ENCODE measurements at regions of chr20 and their contacts with region 1.

Region 1: DNA sequence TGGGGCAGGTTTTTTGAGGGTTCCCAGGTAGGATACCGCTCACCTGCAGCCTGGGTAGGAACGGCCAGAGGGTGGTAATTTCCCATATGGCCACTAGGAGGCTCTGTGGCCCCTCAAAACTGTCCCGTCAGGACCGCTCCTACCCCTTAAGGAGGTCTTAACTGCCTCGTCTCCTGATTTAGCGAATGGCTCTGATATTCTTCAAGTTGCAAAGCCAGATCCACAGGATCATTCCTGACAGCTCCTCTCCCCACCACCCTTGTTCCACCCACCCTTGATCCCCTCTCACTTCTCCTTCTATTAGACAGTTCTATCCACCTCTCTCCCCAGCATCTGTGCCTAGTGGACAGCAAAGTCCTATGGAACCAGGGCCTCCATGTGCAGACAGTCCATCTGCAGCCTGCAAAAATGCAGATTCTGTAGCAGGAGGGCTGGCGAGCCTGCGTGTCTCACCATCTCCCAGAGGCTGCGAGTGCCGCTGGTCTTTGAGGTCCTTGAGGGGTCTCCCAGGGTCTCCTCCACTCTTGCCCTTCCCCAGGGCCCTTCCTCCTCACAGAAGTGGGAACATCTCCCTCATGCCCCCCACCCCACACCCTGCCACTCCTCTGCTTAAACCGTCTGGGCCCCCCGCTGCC is 34.3 kb upstream of the ZBP1 start:
- DNase-seq: peak; percentile 76
- H3K4me3 ChIP-seq: no peak overlapping the region
- H3K27ac ChIP-seq: no peak overlapping the region
- H3K4me1 ChIP-seq: peaks cover 0 to 7% (median 2%) of the 10 kb centered on the region in 4 donors
- H3K27me3 ChIP-seq: no peaks in the 10 kb centered on the region
- CTCF ChIP-seq: peak; percentile 79 to 96 (median 92)
- EP300 ChIP-seq: no peak
- POLR2A ChIP-seq: no peak

Region 2: DNA sequence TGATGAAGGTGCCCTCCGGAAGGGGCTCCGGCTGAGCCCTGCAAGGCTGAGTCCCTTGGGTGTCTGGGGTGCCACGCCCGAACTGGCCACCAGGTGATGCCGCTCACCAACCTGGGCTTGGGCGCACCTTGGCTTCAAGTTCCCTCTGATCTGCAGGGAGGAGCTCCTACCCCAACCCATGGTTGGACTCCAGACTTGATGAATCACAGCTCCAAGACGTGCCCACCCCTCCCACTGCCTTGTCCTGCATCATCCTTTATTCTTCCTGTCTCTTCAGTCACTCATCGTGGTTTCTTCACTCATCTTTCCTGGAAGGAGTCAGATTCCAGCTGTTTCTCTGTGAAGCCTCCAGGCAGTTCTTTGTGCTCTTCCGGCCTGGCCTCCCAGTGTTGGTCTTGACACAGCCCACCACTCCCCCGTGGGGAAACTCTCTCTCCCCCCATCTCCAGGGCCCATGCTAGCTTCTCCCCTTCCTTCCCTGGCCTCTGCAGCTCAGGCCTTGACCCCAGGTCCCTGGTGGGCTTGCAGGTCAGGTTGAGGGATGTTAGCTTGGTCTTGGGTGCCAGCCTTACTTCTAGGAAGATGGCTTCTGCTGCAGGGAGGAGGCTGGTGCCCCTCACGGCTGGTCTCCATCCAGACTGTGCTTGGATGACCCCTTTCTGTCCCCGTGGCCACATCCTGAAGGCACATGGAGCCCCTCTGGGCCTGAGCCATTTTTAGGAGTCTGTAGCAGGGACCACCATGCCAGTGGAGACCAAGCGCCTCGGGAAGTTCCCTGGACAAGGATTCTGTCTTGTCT is 31.7 kb before region 1 on chr20:
- intact Hi-C with region 1: no loop called
- DNase-seq: no peak
- H3K4me3 ChIP-seq: no peak overlapping the region
- H3K27ac ChIP-seq: no peak overlapping the region
- H3K4me1 ChIP-seq: peaks cover 0 to 9% (median 6%) of the 10 kb centered on the region in 4 donors
- H3K27me3 ChIP-seq: peaks cover 0 to 20% (median 4%) of the 10 kb centered on the region in 3 donors
- CTCF ChIP-seq: peak in 3 of 4 experiments; percentile 42 to 54 (median 45)
- EP300 ChIP-seq: no peak
- POLR2A ChIP-seq: no peak

Region 3: GRCh38 chr20:58087193-58087858 is 432.8 kb after region 1 on chr20:
- intact Hi-C with region 1: loop called (anchors 5 kb)
- DNase-seq: peak; percentile 43
- H3K4me3 ChIP-seq: no peak overlapping the region
- H3K27ac ChIP-seq: no peak overlapping the region
- H3K4me1 ChIP-seq: peaks cover 0 to 1% (median 0%) of the 10 kb centered on the region in 4 donors
- H3K27me3 ChIP-seq: no peaks in the 10 kb centered on the region
- CTCF ChIP-seq: peak in 3 of 4 experiments; percentile 57 to 85 (median 65)
- EP300 ChIP-seq: no peak
- POLR2A ChIP-seq: no peak

Region 4: GRCh38 chr20:58179432-58180099 is 525.1 kb after region 1 on chr20:
- intact Hi-C with region 1: loop called (anchors 1 kb)
- DNase-seq: peak; percentile 73
- H3K4me3 ChIP-seq: peak overlapping the region in 3 of 4 donors; percentile 12 to 30 (median 25)
- H3K27ac ChIP-seq: no peak overlapping the region
- H3K4me1 ChIP-seq: peaks cover 0 to 20% (median 13%) of the 10 kb centered on the region in 4 donors
- H3K27me3 ChIP-seq: peaks cover 0 to 10% (median 0%) of the 10 kb centered on the region in 3 donors
- CTCF ChIP-seq: peak; percentile 82 to 97 (median 88)
- EP300 ChIP-seq: no peak
- POLR2A ChIP-seq: no peak

Measured in sigmoid colon (tissue), 7 donors.